A549 (cell line): ENCODE measurements at regions of chr1 and their contacts with region 1.

Region 1: GRCh38 chr1:28208818-28209441 is 23.9 kb downstream of the DNAJC8 start:
- DNase-seq: peak; percentile 42 to 69
- ATAC-seq: peak; percentile 85 to 90
- H3K4me3 ChIP-seq: no peak overlapping the region
- H3K27ac ChIP-seq: no peak overlapping the region
- H3K4me1 ChIP-seq: 0 out of 3 replicates have a peak, but pooled peaks cover 3% of the 10 kb centered on the region
- CTCF ChIP-seq: peak; percentile 79
- EP300 ChIP-seq: no peak
- POLR2A ChIP-seq: no peak
- RAD21 ChIP-seq: peak; percentile 87 to 88

Region 2: GRCh38 chr1:28010969-28011368 is 198.0 kb before region 1 on chr1:
- CTCF ChIA-PET with region 1: no interaction called
- POLR2A ChIA-PET with region 1: no interaction called
- DNase-seq: no peak
- ATAC-seq: no peak
- H3K4me3 ChIP-seq: no peak overlapping the region
- H3K27ac ChIP-seq: no peak overlapping the region
- H3K4me1 ChIP-seq: 0 out of 3 replicates have a peak, but pooled peaks cover 2% of the 10 kb centered on the region
- CTCF ChIP-seq: no peak
- EP300 ChIP-seq: no peak
- POLR2A ChIP-seq: no peak
- RAD21 ChIP-seq: no peak

Region 3: GRCh38 chr1:28064064-28064463 is 144.9 kb before region 1 on chr1:
- CTCF ChIA-PET with region 1: no interaction called
- POLR2A ChIA-PET with region 1: no interaction called
- DNase-seq: no peak
- ATAC-seq: no peak
- H3K4me3 ChIP-seq: no peak overlapping the region
- H3K27ac ChIP-seq: no peak overlapping the region
- H3K4me1 ChIP-seq: peaks cover 33% of the 10 kb centered on the region; the same call in 2 of the 3 replicates
- CTCF ChIP-seq: no peak
- EP300 ChIP-seq: no peak
- POLR2A ChIP-seq: no peak
- RAD21 ChIP-seq: no peak

Region 4: GRCh38 chr1:28099050-28099769 is 109.7 kb before region 1 on chr1:
- CTCF ChIA-PET with region 1: interaction called, 13 read pairs
- POLR2A ChIA-PET with region 1: no interaction called
- DNase-seq: peak in 1 of 2 experiments; percentile 24
- ATAC-seq: peak; percentile 34 to 67; a peak in 4 of 6 replicates
- H3K4me3 ChIP-seq: no peak overlapping the region
- H3K27ac ChIP-seq: peak overlapping the region in 1 of 2 experiments; percentile 68; a peak in 3 of 6 replicates
- H3K4me1 ChIP-seq: peaks cover 5% of the 10 kb centered on the region
- CTCF ChIP-seq: no peak
- EP300 ChIP-seq: no peak
- POLR2A ChIP-seq: no peak
- RAD21 ChIP-seq: no peak

Region 5: DNA sequence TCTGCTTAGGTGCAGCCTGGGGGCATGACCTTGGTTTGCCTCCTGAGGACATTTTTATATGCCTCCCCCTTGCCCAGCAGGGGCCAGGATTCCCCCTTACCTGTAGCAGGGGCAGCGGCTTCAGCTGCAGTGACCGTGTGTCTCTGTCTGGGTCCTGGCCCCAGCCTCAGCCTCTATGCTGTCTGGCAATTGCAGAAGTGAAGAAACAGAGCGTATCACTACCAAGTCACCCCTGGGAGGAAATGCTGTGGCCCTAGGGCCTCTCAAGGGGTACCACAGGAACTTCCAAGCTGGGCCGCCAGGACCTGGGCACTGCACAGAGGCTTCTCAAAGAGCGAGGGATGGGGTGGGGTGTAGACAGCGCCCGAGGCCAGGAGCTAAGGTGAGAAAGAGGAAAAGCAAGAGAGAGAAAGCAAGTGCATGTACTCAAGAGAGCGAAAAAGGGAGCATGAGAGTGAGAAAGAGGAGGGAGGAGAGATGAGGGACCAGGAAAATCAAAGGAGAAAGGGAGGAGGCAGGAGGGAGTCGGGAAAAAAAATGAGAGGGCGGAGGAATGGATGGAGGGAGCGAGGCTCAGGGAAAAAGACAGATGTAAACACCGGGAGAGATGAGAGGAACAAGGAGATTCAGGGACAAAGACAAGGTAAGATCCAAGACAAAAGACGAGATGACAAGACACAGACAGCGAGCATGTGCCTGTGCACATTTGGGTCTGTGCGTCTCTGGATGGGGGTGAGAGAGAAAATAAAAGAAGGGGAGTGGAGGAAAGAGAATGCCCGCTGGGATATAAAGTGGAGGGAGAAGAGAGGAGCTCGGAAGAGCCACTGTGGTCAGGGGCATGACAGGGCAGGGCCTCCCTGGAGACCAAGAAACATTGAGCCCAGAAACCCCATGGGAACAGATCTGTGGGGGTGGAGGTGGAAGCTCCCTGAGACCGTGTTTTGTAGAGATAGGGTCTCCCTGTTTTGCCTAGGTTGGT is 32.1 kb before region 1 on chr1 and contains the start of gene PTAFR:
- CTCF ChIA-PET with region 1: no interaction called
- POLR2A ChIA-PET with region 1: no interaction called
- DNase-seq: no peak
- ATAC-seq: no peak
- H3K4me3 ChIP-seq: no peak within 1 kb of the TSS
- H3K27ac ChIP-seq: no peak within 1 kb of the TSS; a peak in 1 of 6 replicates
- H3K4me1 ChIP-seq: no peaks in the 10 kb centered on the region
- CTCF ChIP-seq: no peak
- EP300 ChIP-seq: no peak
- POLR2A ChIP-seq: no peak
- RAD21 ChIP-seq: no peak
- polyA plus RNA-seq, gene PTAFR: 0.58 and 0.83 TPM in 2 replicates

Region 6: DNA sequence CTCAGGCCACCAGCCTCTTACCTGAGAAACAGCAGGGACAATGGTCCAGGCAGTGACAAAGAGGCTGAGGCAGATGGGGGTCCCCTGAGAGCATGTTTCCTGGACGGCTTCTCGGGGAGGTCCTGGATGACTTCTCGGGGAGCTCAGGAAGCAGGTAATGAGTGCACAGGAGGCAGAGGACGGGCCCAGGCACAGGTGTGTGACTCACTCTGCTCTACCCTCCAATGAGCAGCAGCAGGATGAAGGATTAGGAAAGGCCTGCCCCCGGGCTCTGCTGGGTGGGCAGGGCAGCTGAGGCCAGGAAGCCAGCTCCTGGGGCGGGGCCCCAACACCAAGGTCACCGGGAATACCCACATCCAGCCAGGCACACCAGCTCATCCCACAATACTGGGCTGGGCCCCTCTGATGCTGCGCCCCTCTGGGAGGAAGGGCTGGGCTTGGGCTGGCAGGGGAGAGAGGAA is 15.2 kb before region 1 on chr1:
- CTCF ChIA-PET with region 1: interaction called, 17 read pairs
- POLR2A ChIA-PET with region 1: no interaction called
- DNase-seq: no peak
- ATAC-seq: peak; percentile 49 to 51; a peak in 5 of 6 replicates
- H3K4me3 ChIP-seq: no peak overlapping the region
- H3K27ac ChIP-seq: peak overlapping the region in 1 of 2 experiments; percentile 69; a peak in 3 of 6 replicates
- H3K4me1 ChIP-seq: peaks cover 20% of the 10 kb centered on the region
- CTCF ChIP-seq: no peak
- EP300 ChIP-seq: no peak
- POLR2A ChIP-seq: no peak
- RAD21 ChIP-seq: no peak